IMR-90 (cell line): ENCODE measurements at regions of chr2 and their contacts with region 1.

Region 1: GRCh38 chr2:189569295-189569910 is 11.2 kb downstream of the SLC40A1 start:
- DNase-seq: peak; percentile 34
- ATAC-seq: 0 out of 2 replicates have a peak, but pooled peaks have one; percentile 33
- H3K4me3 ChIP-seq: no peak overlapping the region
- H3K27ac ChIP-seq: no peak overlapping the region
- H3K4me1 ChIP-seq: peaks cover 7% of the 10 kb centered on the region
- H3K27me3 ChIP-seq: no peaks in the 10 kb centered on the region
- CTCF ChIP-seq: 0 out of 2 replicates have a peak, but pooled peaks have one; percentile 16
- POLR2A ChIP-seq: no peak
- RAD21 ChIP-seq: no peak

Region 2: DNA sequence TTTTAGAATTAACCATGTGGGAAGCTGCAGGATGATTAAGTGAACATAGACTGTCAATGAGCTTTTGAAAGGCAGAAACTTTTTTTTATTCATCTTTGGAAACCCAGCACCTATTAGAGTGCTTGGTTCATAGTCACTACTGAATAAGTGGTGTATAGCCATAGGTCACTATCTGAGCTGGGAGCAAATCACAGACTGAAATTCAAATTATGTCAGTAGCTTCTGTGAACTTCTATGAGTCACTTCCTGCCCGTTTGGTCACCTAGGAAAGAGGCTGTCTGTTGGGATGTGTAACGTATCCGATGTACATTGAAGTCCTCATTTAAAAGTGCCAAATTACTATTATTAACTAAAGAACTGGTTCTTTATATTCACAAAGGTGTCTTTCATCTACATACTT is 31.6 kb after region 1 on chr2:
- CTCF ChIA-PET with region 1: no interaction called
- POLR2A ChIA-PET with region 1: no interaction called
- dilution Hi-C with region 1: no loop called
- in situ Hi-C with region 1: no loop called
- intact Hi-C with region 1: loop called (anchors 5 kb)
- DNase-seq: peak; percentile 54
- ATAC-seq: no peak
- H3K4me3 ChIP-seq: no peak overlapping the region
- H3K27ac ChIP-seq: no peak overlapping the region
- H3K4me1 ChIP-seq: peaks cover 2% of the 10 kb centered on the region
- H3K27me3 ChIP-seq: no peaks in the 10 kb centered on the region
- CTCF ChIP-seq: no peak
- POLR2A ChIP-seq: no peak
- RAD21 ChIP-seq: no peak

Region 3: GRCh38 chr2:191453761-191454160 is 1884.4 kb after region 1 on chr2:
- CTCF ChIA-PET with region 1: no interaction called
- POLR2A ChIA-PET with region 1: no interaction called
- dilution Hi-C with region 1: no loop called
- in situ Hi-C with region 1: no loop called
- intact Hi-C with region 1: no loop called
- DNase-seq: no peak
- ATAC-seq: no peak
- H3K4me3 ChIP-seq: no peak overlapping the region
- H3K27ac ChIP-seq: no peak overlapping the region
- H3K4me1 ChIP-seq: no peaks in the 10 kb centered on the region
- H3K27me3 ChIP-seq: no peaks in the 10 kb centered on the region
- CTCF ChIP-seq: no peak
- POLR2A ChIP-seq: no peak
- RAD21 ChIP-seq: no peak